Activated CD4-positive, alpha-beta T cell treated with anti-CD3 and anti-CD28 coated beads for 36 hours (primary cell): ENCODE measurements at regions of chr2 and their contacts with region 1.

Region 1: DNA sequence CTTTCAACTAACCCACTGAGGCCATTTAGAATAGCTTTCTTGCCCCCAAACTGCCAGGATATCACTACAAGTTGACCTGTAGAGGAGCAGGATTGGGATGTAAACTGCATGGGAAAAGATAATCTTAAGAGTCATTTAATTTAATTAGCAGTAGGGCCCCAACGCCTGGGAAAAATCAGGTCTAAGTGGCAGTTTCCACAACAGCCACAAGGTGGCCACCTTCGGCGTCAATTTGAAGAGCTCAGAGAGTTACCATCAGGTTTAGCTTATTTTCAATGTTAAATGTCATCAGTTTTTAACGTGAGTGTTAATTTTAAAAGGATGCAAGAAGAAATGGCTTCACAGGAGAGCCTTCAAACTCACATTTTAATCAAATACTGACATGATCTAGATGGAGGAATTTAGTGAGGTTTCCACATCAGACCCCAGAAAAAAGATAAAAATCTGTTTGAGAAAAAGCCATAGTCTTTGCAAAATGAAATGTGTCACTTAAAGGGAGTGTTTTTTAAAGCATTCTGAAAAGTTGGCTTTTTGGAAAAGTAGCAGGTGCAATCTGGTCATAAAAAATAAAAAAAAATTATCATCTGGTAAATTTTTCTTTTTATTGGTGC is 77.3 kb upstream of the UPP2 start:
- DNase-seq: peak; percentile 74
- ATAC-seq: peak; percentile 49
- H3K4me3 Mint-ChIP-seq: no peak overlapping the region
- H3K27ac Mint-ChIP-seq: no peak overlapping the region
- H3K4me1 Mint-ChIP-seq: peaks cover 6% of the 10 kb centered on the region
- H3K27me3 Mint-ChIP-seq: no peaks in the 10 kb centered on the region

Region 2: GRCh38 chr2:157777427-157777826 is 247.0 kb before region 1 on chr2:
- CTCF ChIA-PET with region 1: interaction called, 13 read pairs
- POLR2A ChIA-PET with region 1: no interaction called
- intact Hi-C with region 1: no loop called
- DNase-seq: peak; percentile 68
- ATAC-seq: no peak
- H3K4me3 Mint-ChIP-seq: no peak overlapping the region
- H3K27ac Mint-ChIP-seq: no peak overlapping the region
- H3K4me1 Mint-ChIP-seq: peaks cover 12% of the 10 kb centered on the region
- H3K27me3 Mint-ChIP-seq: no peaks in the 10 kb centered on the region

Region 3: GRCh38 chr2:157784169-157784822 is 240.1 kb before region 1 on chr2:
- CTCF ChIA-PET with region 1: interaction called, 11 read pairs
- POLR2A ChIA-PET with region 1: no interaction called
- intact Hi-C with region 1: no loop called
- DNase-seq: peak; percentile 42
- ATAC-seq: peak; percentile 71
- H3K4me3 Mint-ChIP-seq: no peak overlapping the region
- H3K27ac Mint-ChIP-seq: peak overlapping the region; percentile 51
- H3K4me1 Mint-ChIP-seq: peaks cover 49% of the 10 kb centered on the region
- H3K27me3 Mint-ChIP-seq: no peaks in the 10 kb centered on the region

Region 4: GRCh38 chr2:158006961-158007719 is 17.3 kb before region 1 on chr2:
- CTCF ChIA-PET with region 1: interaction called, 29 read pairs
- POLR2A ChIA-PET with region 1: no interaction called
- intact Hi-C with region 1: no loop called
- DNase-seq: peak; percentile 44
- ATAC-seq: peak; percentile 82
- H3K4me3 Mint-ChIP-seq: no peak overlapping the region
- H3K27ac Mint-ChIP-seq: no peak overlapping the region
- H3K4me1 Mint-ChIP-seq: peaks cover 18% of the 10 kb centered on the region
- H3K27me3 Mint-ChIP-seq: peaks cover 6% of the 10 kb centered on the region

Region 5: GRCh38 chr2:158045362-158045761 is 21.0 kb after region 1 on chr2:
- CTCF ChIA-PET with region 1: interaction called, 12 read pairs
- POLR2A ChIA-PET with region 1: no interaction called
- intact Hi-C with region 1: no loop called
- DNase-seq: no peak
- ATAC-seq: no peak
- H3K4me3 Mint-ChIP-seq: no peak overlapping the region
- H3K27ac Mint-ChIP-seq: no peak overlapping the region
- H3K4me1 Mint-ChIP-seq: peaks cover 10% of the 10 kb centered on the region
- H3K27me3 Mint-ChIP-seq: no peaks in the 10 kb centered on the region

Region 6: GRCh38 chr2:158745044-158745865 is 720.9 kb after region 1 on chr2:
- CTCF ChIA-PET with region 1: interaction called, 29 read pairs
- POLR2A ChIA-PET with region 1: no interaction called
- intact Hi-C with region 1: loop called (anchors 1 to 2 kb)
- DNase-seq: peak; percentile 65
- ATAC-seq: no peak
- H3K4me3 Mint-ChIP-seq: no peak overlapping the region
- H3K27ac Mint-ChIP-seq: no peak overlapping the region
- H3K4me1 Mint-ChIP-seq: no peaks in the 10 kb centered on the region
- H3K27me3 Mint-ChIP-seq: peaks cover 23% of the 10 kb centered on the region

Region 7: DNA sequence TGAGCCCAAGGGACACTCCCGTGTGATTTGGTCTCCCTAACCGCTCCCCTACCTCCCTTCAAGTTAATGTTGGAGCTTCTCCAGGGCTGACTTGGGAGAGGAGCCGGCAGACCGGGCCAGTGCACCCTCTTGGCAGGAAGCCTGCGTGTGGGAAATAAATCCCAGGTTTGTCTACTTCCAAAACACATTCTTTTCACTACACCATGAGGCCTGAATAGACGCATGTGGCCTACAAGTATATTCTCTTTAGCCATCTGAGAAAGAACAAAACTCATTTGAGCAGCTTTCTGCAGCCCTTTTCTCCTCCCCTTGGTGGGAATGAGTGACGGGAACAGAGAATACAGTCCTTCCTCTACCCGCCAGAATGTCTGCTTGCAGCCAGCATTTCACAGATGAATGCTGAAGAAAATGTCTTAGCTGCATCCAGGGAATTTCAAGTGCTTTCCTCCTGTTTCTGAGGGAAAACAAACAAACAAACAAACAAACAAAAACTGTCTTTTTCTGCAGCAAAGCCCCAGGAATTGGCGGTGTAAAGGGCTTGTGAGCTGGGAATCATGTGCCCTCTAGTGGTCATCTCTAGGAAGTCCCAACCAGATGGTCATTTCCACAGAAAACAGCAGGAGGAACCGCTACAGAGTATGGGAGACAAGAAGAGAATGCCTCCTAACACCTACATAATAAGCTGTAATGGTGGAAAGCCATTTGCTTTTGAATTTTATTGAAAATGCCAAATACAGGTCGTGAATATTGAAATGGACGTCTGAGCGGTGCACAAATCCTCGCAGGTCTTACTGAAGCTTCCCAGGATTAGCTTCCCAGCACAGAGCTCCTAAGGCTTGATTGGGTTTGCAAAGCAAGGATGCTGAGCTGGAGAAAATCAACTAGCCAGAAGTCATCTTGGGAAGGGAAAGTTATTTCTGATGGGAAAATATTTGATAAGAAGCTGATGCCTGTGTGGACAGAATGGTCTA is 729.5 kb after region 1 on chr2:
- CTCF ChIA-PET with region 1: interaction called, 41 read pairs
- POLR2A ChIA-PET with region 1: no interaction called
- intact Hi-C with region 1: loop called in 1 of 2 experiments (anchors 1 kb)
- DNase-seq: peak; percentile 44
- ATAC-seq: peak; percentile 63
- H3K4me3 Mint-ChIP-seq: no peak overlapping the region
- H3K27ac Mint-ChIP-seq: no peak overlapping the region
- H3K4me1 Mint-ChIP-seq: peaks cover 3% of the 10 kb centered on the region
- H3K27me3 Mint-ChIP-seq: peaks cover 11% of the 10 kb centered on the region